WTC11 (cell line): ENCODE measurements at regions of chr10 and their contacts with region 1.

Region 1: DNA sequence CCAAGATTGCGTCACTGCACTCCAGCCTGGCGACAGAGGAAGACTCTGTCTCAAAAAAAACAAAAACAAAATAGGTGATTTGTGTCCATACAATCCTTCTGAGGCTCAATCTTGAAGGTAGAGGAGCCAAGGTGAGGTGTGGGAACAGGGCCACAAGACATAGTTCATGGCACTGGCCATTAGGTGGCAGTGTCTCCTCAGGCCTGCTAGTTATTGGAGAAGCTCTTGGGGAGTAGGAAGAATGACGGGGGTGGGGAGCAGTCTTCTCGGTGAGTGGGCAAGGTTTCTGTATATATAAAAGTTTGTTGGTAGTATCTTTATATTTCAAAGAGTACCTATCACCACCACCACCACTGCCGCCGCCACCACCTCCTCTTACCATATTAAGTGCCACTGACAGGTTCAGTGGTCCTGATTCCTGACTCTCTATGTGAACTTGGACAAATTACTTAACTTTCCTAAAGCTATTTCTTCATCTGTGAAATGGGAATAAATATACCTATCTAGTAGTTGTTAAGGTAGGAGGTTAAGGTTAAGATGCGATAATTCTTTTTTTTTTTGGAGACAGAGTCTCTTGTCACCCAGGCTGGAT is 24.0 kb downstream of the CCSER2 start:
- DNase-seq: peak; percentile 82
- ATAC-seq: peak; percentile 93
- H3K4me3 Mint-ChIP-seq: no peak overlapping the region
- H3K27ac Mint-ChIP-seq: no peak overlapping the region
- H3K4me1 Mint-ChIP-seq: peaks cover 53% of the 10 kb centered on the region
- H3K27me3 Mint-ChIP-seq: no peaks in the 10 kb centered on the region
- CTCF ChIP-seq: peak; percentile 62; the same call in 1 of the 2 replicates

Region 2: DNA sequence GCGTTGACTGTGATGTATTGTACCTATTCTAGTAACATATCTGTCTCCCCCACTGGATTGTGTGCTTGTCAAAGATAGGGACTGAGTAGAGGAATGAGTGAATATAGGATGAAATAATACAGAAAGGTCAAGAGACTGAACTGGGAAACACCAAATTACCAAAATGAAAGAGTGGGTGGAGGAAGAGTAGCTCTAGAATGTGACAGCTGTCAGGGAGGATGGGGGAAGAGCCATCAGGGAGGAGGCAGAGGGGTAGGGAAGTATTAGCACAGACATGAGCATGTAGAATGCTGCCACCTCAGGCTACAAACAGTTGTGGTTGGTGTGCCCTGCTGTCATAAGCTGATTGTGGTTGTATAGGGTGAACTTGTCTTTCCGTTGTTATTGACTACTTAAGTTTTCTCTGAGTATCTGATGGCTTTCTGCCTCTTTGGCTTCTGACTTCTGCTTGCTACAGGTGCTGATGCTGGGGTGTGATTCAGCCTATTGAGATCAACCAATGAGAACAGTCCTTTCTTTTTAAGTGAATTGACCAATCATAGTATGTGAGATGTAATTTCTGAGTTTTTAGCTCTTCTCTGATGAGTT is 18.4 kb before region 1 on chr10:
- CTCF ChIA-PET with region 1: interaction called, 14 read pairs
- POLR2A ChIA-PET with region 1: interaction called, 3 read pairs
- DNase-seq: no peak
- ATAC-seq: peak; percentile 41
- H3K4me3 Mint-ChIP-seq: no peak overlapping the region
- H3K27ac Mint-ChIP-seq: peak overlapping the region; percentile 27; the same call in 1 of the 2 replicates
- H3K4me1 Mint-ChIP-seq: peaks cover 48% of the 10 kb centered on the region
- H3K27me3 Mint-ChIP-seq: no peaks in the 10 kb centered on the region
- CTCF ChIP-seq: no peak

Region 3: DNA sequence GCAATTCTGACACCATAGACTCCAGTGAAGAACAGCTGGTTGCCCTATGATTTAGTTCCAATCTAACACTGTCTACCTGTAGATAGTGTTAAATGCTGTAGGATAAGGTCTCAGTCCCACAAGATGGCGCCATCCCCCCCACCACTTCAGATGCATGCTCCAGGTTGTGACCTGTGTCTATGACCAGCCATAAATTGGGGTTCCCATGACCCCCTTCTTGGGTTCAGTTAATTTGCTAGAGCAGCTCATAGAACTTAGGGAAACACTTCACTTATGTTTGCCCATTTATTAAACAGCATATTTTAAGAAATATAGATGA is 10.8 kb before region 1 on chr10:
- CTCF ChIA-PET with region 1: interaction called, 28 read pairs
- POLR2A ChIA-PET with region 1: no interaction called
- DNase-seq: peak; percentile 32
- ATAC-seq: peak; percentile 60
- H3K4me3 Mint-ChIP-seq: no peak overlapping the region
- H3K27ac Mint-ChIP-seq: no peak overlapping the region
- H3K4me1 Mint-ChIP-seq: peaks cover 28% of the 10 kb centered on the region
- H3K27me3 Mint-ChIP-seq: no peaks in the 10 kb centered on the region
- CTCF ChIP-seq: no peak